ENCODE measurements at regions of chr1 and their contacts with region 1.

Region 1: GRCh38 chr1:93061895-93062792 is 16.9 kb upstream of the MTF2 start:
- DNase-seq: peak; percentile 66
- H3K4me3 Mint-ChIP-seq: no peak overlapping the region
- H3K27ac Mint-ChIP-seq: no peak overlapping the region
- H3K4me1 Mint-ChIP-seq: no peaks in the 10 kb centered on the region
- H3K27me3 Mint-ChIP-seq: peaks cover 38% of the 10 kb centered on the region

Region 2: DNA sequence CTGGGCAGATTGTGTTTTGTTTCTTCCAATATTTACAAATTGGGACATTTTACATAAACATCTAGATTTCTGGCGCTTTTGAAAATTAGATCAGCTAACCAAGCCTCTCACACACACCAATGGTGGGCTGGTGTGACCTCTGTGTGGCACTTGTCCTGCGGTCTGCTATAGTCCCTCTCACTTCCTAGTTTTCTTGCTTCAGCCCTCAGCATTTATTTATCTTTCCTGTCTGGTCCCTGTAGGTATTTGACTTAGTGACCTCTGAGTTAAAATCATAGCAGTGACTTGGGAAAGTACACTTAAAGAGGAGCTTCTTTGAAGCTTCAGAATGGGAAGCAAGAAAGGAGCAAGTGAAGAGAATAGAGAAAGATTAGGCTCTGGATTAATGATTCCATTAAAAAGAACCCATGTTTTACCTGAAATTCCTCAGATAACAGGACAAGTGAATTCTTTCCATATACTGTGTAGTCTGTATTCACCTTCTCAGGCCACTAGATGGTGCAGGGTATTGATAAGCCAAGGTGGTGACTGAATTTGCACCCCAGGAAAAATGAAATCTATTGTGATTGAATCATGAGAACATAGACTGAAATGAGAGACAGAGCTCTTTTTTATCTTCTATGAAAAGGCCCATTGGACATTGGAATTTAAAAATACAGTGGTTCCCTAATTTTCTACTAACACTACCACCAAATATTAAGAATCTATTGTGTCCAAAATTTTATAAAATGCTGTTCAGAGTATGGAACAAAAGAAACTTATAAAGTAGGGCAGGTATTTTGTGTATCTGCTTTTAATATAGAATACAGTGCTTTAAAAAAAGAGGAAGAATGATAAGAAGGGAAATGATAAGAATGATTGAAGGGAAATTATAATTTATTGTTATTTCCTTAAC is 93.8 kb before region 1 on chr1:
- CTCF ChIA-PET with region 1: interaction called, 11 read pairs
- DNase-seq: peak; percentile 37
- H3K4me3 Mint-ChIP-seq: no peak overlapping the region
- H3K27ac Mint-ChIP-seq: no peak overlapping the region
- H3K4me1 Mint-ChIP-seq: peaks cover 43% of the 10 kb centered on the region
- H3K27me3 Mint-ChIP-seq: no peaks in the 10 kb centered on the region

Region 3: GRCh38 chr1:93021539-93022134 is 40.5 kb before region 1 on chr1:
- CTCF ChIA-PET with region 1: interaction called, 80 read pairs
- DNase-seq: no peak
- H3K4me3 Mint-ChIP-seq: no peak overlapping the region
- H3K27ac Mint-ChIP-seq: no peak overlapping the region
- H3K4me1 Mint-ChIP-seq: no peaks in the 10 kb centered on the region
- H3K27me3 Mint-ChIP-seq: peaks cover 27% of the 10 kb centered on the region

Region 4: GRCh38 chr1:93029317-93029716 is 32.8 kb before region 1 on chr1:
- CTCF ChIA-PET with region 1: interaction called, 80 read pairs
- DNase-seq: peak; percentile 79
- H3K4me3 Mint-ChIP-seq: no peak overlapping the region
- H3K27ac Mint-ChIP-seq: peak overlapping the region; percentile 33
- H3K4me1 Mint-ChIP-seq: peaks cover 37% of the 10 kb centered on the region
- H3K27me3 Mint-ChIP-seq: peaks cover 15% of the 10 kb centered on the region

Region 5: GRCh38 chr1:93087532-93087931 is 25.4 kb after region 1 on chr1:
- CTCF ChIA-PET with region 1: no interaction called
- DNase-seq: no peak
- H3K4me3 Mint-ChIP-seq: no peak overlapping the region
- H3K27ac Mint-ChIP-seq: no peak overlapping the region
- H3K4me1 Mint-ChIP-seq: peaks cover 29% of the 10 kb centered on the region
- H3K27me3 Mint-ChIP-seq: no peaks in the 10 kb centered on the region

Measured in activated naive CD4-positive, alpha-beta T cell treated with anti-CD3 and anti-CD28 coated beads, Interleukin-2, amount 10 ng/mL, durations not matched to agents 7 days and 5 days (primary cell).